ENCODE measurements at regions of chr3 and their contacts with region 1.

Region 1: DNA sequence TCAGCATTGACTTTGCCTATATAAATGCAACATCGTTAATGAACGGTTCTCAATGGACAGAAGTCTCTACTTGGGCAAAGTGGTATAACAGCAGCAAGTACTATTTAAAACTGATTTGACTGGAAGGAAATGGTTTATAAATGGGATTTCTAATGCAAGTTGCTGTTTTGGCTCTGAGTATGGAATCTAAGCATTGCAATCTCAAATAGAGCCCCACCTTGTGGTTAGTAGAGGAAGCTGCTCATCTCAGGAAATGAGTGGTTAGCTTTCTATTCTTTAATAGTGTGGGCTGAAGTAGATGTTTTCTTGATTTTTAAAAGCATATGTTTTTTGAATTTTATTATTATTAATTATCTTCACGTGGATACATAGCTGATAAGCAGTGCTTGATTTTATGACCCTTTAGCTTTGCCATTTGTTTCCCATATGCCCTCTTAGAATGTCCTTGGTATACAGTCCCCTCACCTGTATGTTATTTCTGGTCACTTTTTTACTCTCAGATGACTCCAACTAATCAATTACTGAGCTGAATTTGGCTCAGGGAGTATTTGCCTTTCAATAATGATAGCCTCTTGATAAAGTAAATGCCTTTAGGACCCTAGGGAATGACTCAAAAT is 67.1 kb downstream of the OXSM start:
- DNase-seq: peak; percentile 3
- H3K4me3 Mint-ChIP-seq: no peak overlapping the region
- H3K27ac Mint-ChIP-seq: no peak overlapping the region
- H3K4me1 Mint-ChIP-seq: peaks cover 26% of the 10 kb centered on the region
- H3K27me3 Mint-ChIP-seq: no peaks in the 10 kb centered on the region
- CTCF ChIP-seq: peak; percentile 40

Region 2: DNA sequence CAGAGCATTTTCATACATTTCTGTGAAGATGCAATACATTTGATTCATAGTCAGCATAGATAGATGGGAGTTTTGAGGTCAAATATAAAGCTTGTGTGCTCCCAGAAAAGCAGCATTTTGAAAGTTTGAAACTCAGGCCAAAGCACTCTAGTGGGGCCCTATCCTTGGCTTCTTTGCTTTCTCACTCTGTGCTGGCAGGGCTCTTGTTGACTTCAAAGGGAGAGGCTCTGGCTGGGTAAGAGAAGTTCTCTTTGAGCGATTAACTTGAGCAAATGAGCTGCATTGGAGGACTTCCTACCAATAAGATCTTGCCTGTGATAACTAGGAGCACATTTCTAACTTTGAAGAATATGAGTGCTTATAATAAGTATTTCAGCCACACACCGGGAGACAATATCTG is 643.0 kb before region 1 on chr3:
- CTCF ChIA-PET with region 1: no interaction called
- intact Hi-C with region 1: no loop called
- DNase-seq: no peak
- H3K4me3 Mint-ChIP-seq: no peak overlapping the region
- H3K27ac Mint-ChIP-seq: no peak overlapping the region
- H3K4me1 Mint-ChIP-seq: no peaks in the 10 kb centered on the region
- H3K27me3 Mint-ChIP-seq: no peaks in the 10 kb centered on the region
- CTCF ChIP-seq: no peak

Region 3: DNA sequence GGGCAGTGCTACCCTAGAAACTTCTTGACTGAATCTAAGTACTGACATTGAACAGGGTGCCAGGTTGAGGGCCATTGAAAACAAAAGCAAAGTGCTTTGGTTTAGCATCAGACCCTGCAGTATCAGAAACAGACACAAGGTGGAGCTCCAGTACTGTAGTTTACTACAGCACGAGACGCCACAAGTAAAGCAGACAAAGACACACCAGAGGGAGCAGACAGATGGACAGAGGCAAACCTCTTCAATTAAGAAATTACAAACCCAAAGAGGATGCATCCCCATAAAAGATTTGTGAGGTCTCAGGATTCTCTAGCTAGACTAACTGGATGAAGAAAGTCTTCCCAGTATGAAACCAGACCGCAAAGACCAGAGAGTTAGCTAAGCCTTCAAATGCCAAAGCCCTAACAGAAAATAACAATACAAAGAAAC is 208.9 kb before region 1 on chr3:
- CTCF ChIA-PET with region 1: interaction called, 7 read pairs
- intact Hi-C with region 1: loop called (anchors 1 kb)
- DNase-seq: peak; percentile 80
- H3K4me3 Mint-ChIP-seq: no peak overlapping the region
- H3K27ac Mint-ChIP-seq: no peak overlapping the region
- H3K4me1 Mint-ChIP-seq: peaks cover 26% of the 10 kb centered on the region
- H3K27me3 Mint-ChIP-seq: no peaks in the 10 kb centered on the region
- CTCF ChIP-seq: peak; percentile 70

Region 4: GRCh38 chr3:25664810-25665314 is 192.1 kb before region 1 on chr3 and contains the start of gene TOP2B:
- CTCF ChIA-PET with region 1: no interaction called
- intact Hi-C with region 1: loop called (anchors 5 kb)
- DNase-seq: peak; percentile 94
- H3K4me3 Mint-ChIP-seq: peak within 1 kb of the TSS; percentile 98
- H3K27ac Mint-ChIP-seq: peak within 1 kb of the TSS; percentile 99
- H3K4me1 Mint-ChIP-seq: peaks cover 35% of the 10 kb centered on the region
- H3K27me3 Mint-ChIP-seq: no peaks in the 10 kb centered on the region
- CTCF ChIP-seq: no peak
- total RNA-seq, gene TOP2B: 99.9 and 117 TPM in 2 replicates

Region 5: GRCh38 chr3:25843332-25843731 is 13.7 kb before region 1 on chr3:
- CTCF ChIA-PET with region 1: interaction called, 3 read pairs
- intact Hi-C with region 1: loop called (anchors 2 kb)
- DNase-seq: no peak
- H3K4me3 Mint-ChIP-seq: no peak overlapping the region
- H3K27ac Mint-ChIP-seq: no peak overlapping the region
- H3K4me1 Mint-ChIP-seq: no peaks in the 10 kb centered on the region
- H3K27me3 Mint-ChIP-seq: no peaks in the 10 kb centered on the region
- CTCF ChIP-seq: no peak

Measured in Calu3 (cell line).